Psoas muscle (tissue), 8 donors: ENCODE measurements at regions of chr7 and their contacts with region 1.

Region 1: DNA sequence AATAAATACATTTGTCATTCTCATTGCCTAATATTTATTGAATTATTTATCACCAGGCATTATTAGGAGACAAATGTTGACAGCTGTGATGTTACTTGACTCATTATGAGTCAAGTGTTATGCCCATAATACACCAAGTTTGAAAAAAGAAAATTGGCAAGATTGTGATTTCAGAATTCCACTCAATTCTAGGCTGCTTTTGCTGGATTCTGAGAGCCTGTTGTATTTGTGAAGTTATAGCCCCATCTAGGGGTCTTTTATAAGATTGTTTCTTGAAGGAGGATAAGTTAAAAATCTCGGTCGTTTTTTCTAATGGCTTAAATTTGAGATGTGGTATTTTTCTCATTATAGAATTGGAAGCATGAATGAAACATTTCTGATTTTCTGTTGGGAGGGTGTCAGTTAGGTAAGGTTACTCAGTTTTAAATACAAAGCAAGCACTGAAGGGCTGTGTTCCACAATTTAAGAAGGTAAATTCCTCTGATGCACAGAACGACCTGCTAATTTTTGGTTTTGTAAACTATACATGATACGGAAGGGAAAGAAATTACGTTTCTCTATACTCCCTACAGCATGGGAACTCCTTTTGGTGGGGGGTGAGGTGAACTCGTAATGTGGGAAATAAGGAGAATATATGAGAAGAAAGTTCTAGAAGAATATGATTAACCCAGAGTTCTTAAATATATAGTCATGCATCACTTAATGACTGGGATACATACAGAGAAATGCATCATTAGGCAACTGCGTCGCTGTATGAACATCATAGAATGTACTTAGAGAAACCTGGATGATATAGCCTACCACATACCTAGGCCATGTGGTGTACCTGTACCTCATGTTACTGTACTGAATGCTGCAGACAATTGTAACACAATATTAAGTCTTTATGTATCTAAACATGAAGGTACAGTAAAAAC is 2.6 kb downstream of the STK31 start:
- DNase-seq: no peak
- ATAC-seq: peak; percentile 51 to 75 (median 55)
- H3K4me3 ChIP-seq: no peak overlapping the region
- H3K27ac ChIP-seq: no peak overlapping the region
- H3K4me1 ChIP-seq: no peaks in the 10 kb centered on the region
- H3K27me3 ChIP-seq: peaks cover 0 to 4% (median 0%) of the 10 kb centered on the region in 3 donors
- CTCF ChIP-seq: peak; percentile 67

Region 2: DNA sequence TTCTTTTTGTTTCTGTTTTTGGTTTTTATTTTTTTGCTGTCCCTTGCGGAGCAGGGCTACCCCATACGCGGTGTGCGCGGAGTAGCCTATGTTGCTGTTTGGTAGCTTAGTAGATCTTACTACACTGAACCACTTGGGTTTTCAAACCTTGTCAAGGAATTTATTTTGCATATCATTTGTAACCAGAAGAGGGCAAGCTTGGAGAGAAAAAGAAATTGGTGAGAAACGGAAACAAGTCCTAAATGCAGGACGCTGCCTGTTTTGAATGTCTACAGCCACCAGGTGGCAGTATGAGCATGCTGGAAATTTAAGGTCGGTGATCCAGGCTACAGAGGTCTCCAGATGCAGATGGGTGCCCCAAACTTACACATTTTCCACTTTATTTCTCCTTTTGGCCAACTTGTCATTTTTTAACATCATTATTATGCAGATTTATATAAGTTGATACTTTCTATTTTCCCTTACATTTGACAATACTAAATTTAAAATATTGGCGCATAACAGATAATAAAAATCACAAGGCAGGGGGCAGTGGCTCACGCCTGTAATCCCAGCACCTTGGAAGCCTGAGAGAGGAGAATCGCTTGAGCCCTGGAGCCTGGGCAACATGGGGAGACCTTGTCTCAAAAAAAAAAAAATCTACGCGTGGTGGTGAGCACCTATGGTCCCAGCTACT is 165.6 kb before region 1 on chr7:
- intact Hi-C with region 1: loop called (anchors 5 kb)
- DNase-seq: peak; percentile 60 to 71
- ATAC-seq: peak; percentile 68 to 92 (median 79)
- H3K4me3 ChIP-seq: no peak overlapping the region
- H3K27ac ChIP-seq: no peak overlapping the region
- H3K4me1 ChIP-seq: no peaks in the 10 kb centered on the region
- H3K27me3 ChIP-seq: no peaks in the 10 kb centered on the region
- CTCF ChIP-seq: peak; percentile 94

Region 3: DNA sequence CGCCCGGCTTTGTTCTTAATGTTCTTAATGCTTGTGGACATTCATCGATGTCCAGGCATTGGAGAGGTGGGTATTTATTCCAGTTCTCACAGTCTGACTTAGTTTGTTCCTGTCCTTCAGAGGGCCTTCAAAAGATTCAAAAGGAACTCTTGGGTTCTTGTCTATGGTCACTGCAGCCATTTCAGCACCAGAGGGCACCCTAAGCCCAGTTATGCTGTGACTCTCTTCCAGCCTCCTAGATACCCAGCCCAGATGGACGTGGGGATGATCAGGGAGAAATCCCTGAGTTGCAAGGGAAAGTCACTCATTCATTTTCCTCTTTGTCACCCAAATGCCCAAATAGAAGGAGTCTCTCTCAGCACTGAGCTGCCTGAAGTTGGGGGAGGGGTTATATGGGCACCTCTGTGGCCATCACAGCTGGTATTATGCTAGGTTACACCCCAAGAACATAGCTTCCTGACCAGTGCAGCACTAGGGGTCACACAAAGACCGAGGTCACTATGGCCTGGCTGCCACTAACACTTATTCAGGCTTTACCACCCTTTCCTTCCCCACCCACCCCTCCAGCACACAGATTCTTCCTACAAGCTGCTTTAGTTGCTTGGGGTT is 141.9 kb before region 1 on chr7:
- intact Hi-C with region 1: loop called (anchors 1 to 2 kb)
- DNase-seq: peak; percentile 64 to 73
- ATAC-seq: peak; percentile 83 to 92 (median 87)
- H3K4me3 ChIP-seq: no peak overlapping the region
- H3K27ac ChIP-seq: no peak overlapping the region
- H3K4me1 ChIP-seq: no peaks in the 10 kb centered on the region
- H3K27me3 ChIP-seq: no peaks in the 10 kb centered on the region
- CTCF ChIP-seq: peak; percentile 87